ENCODE measurements at regions of chr12 and their contacts with region 1.

Region 1: GRCh38 chr12:19186722-19187661 is 57.5 kb downstream of the PLEKHA5 start:
- DNase-seq: peak in 2 of 9 experiments; percentile 42 to 51
- ATAC-seq: no peak
- H3K4me3 ChIP-seq: no peak overlapping the region
- H3K4me3 Mint-ChIP-seq: no peak overlapping the region
- H3K27ac ChIP-seq: no peak overlapping the region
- H3K27ac Mint-ChIP-seq: no peak overlapping the region
- H3K4me1 ChIP-seq: no peaks in the 10 kb centered on the region
- H3K4me1 Mint-ChIP-seq: no peaks in the 10 kb centered on the region
- H3K27me3 ChIP-seq: no peaks in the 10 kb centered on the region
- H3K27me3 Mint-ChIP-seq: no peaks in the 10 kb centered on the region
- CTCF ChIP-seq: peak; percentile 69

Region 2: DNA sequence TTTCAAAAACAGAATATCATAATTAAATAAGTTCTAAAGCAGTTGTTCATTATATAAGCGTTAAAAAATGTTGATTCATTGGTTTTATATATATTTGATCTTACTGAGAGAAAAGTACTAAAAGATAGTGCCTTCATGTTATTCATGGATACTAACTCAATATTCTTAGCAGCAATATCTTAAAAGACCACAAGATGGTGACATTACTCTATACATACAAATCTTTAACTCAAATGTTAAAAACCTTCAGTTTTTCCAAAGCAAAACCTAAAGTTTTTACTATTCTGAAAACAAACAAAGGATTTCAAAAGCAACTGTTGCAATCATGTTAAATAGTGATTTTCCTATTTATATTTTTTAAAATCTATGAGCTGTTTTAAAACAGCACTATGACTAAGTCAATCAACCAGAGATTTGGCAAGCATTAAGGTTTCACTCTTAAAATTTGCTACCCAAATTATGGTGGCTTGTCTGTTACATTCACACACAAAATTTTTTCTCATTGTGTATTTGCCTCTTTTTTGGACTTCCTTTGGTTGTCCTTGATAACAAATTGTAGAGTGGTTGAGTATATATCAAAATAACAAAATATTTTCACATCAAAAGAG is 1046.9 kb before region 1 on chr12:
- CTCF ChIA-PET with region 1: no interaction called
- POLR2A ChIA-PET with region 1: no interaction called
- intact Hi-C with region 1: loop called (anchors 2 to 5 kb)
- DNase-seq: no peak
- ATAC-seq: no peak
- H3K4me3 ChIP-seq: no peak overlapping the region
- H3K4me3 Mint-ChIP-seq: no peak overlapping the region
- H3K27ac ChIP-seq: no peak overlapping the region
- H3K27ac Mint-ChIP-seq: no peak overlapping the region
- H3K4me1 ChIP-seq: no peaks in the 10 kb centered on the region
- H3K4me1 Mint-ChIP-seq: no peaks in the 10 kb centered on the region
- H3K27me3 ChIP-seq: no peaks in the 10 kb centered on the region
- H3K27me3 Mint-ChIP-seq: no peaks in the 10 kb centered on the region
- CTCF ChIP-seq: no peak

Region 3: GRCh38 chr12:18160901-18161300 is 1026.1 kb before region 1 on chr12:
- CTCF ChIA-PET with region 1: no interaction called
- POLR2A ChIA-PET with region 1: no interaction called
- intact Hi-C with region 1: loop called (anchors 5 kb)
- DNase-seq: no peak
- ATAC-seq: no peak
- H3K4me3 ChIP-seq: no peak overlapping the region
- H3K4me3 Mint-ChIP-seq: no peak overlapping the region
- H3K27ac ChIP-seq: no peak overlapping the region
- H3K27ac Mint-ChIP-seq: no peak overlapping the region
- H3K4me1 ChIP-seq: no peaks in the 10 kb centered on the region
- H3K4me1 Mint-ChIP-seq: peaks cover 7% of the 10 kb centered on the region
- H3K27me3 ChIP-seq: no peaks in the 10 kb centered on the region
- H3K27me3 Mint-ChIP-seq: no peaks in the 10 kb centered on the region
- CTCF ChIP-seq: no peak

Region 4: GRCh38 chr12:18250313-18250916 is 936.6 kb before region 1 on chr12:
- CTCF ChIA-PET with region 1: no interaction called
- POLR2A ChIA-PET with region 1: no interaction called
- intact Hi-C with region 1: loop called in 1 of 2 experiments (anchors 5 kb)
- DNase-seq: peak in 2 of 9 experiments; percentile 6 to 13
- ATAC-seq: no peak
- H3K4me3 ChIP-seq: no peak overlapping the region
- H3K4me3 Mint-ChIP-seq: no peak overlapping the region
- H3K27ac ChIP-seq: no peak overlapping the region
- H3K27ac Mint-ChIP-seq: no peak overlapping the region
- H3K4me1 ChIP-seq: no peaks in the 10 kb centered on the region
- H3K4me1 Mint-ChIP-seq: no peaks in the 10 kb centered on the region
- H3K27me3 ChIP-seq: no peaks in the 10 kb centered on the region
- H3K27me3 Mint-ChIP-seq: no peaks in the 10 kb centered on the region
- CTCF ChIP-seq: no peak

Region 5: GRCh38 chr12:18861287-18861858 is 325.6 kb before region 1 on chr12:
- CTCF ChIA-PET with region 1: interaction called, 3 read pairs
- POLR2A ChIA-PET with region 1: no interaction called
- intact Hi-C with region 1: loop called in 1 of 2 experiments (anchors 2 kb)
- DNase-seq: peak in 2 of 9 experiments; percentile 13 to 27
- ATAC-seq: no peak
- H3K4me3 ChIP-seq: no peak overlapping the region
- H3K4me3 Mint-ChIP-seq: no peak overlapping the region
- H3K27ac ChIP-seq: no peak overlapping the region
- H3K27ac Mint-ChIP-seq: no peak overlapping the region
- H3K4me1 ChIP-seq: no peaks in the 10 kb centered on the region
- H3K4me1 Mint-ChIP-seq: no peaks in the 10 kb centered on the region
- H3K27me3 ChIP-seq: no peaks in the 10 kb centered on the region
- H3K27me3 Mint-ChIP-seq: peaks cover 3% of the 10 kb centered on the region
- CTCF ChIP-seq: peak; percentile 27

Region 6: DNA sequence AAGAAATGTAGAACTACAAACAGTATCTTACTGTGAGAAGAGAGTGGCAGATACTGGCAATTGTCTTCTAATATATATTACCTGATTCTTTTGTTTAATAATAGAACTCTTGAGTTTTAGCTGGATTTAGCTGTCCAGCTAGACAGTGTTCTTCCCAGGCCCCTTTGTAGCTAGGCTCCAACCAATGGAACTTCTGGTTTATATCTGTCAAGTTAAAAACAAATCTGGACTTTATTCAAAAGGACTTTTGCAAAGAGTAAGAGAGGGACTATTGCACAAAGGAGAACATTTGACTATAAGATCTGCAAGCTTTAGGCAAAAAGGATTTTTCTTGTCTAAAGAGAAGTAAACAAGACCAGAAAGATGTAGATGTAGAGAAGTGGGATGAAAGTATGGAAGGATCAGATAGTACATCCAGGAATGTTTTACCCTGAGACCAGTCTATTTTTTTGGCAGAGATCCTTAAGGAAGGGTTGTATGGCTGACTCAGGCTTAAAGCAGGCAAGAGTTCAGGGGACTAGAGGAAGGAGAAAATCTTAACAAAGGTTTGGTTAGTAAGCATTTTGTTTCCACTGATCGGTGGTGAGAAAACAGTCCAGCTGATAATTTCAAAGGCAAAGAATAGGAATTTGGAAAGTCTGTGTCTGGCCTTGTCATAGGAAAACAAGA is 168.6 kb before region 1 on chr12:
- CTCF ChIA-PET with region 1: no interaction called
- POLR2A ChIA-PET with region 1: no interaction called
- intact Hi-C with region 1: no loop called
- DNase-seq: no peak
- ATAC-seq: no peak
- H3K4me3 ChIP-seq: no peak overlapping the region
- H3K4me3 Mint-ChIP-seq: no peak overlapping the region
- H3K27ac ChIP-seq: no peak overlapping the region
- H3K27ac Mint-ChIP-seq: no peak overlapping the region
- H3K4me1 ChIP-seq: no peaks in the 10 kb centered on the region
- H3K4me1 Mint-ChIP-seq: no peaks in the 10 kb centered on the region
- H3K27me3 ChIP-seq: no peaks in the 10 kb centered on the region
- H3K27me3 Mint-ChIP-seq: peaks cover 3% of the 10 kb centered on the region
- CTCF ChIP-seq: no peak

Measured in CD8-positive, alpha-beta T cell (primary cell).